CD8-positive, alpha-beta memory T cell (primary cell): ENCODE measurements at regions of chr14 and their contacts with region 1.

Region 1: GRCh38 chr14:60622917-60623257 is 26.4 kb downstream of the SIX1 start:
- DNase-seq: no peak
- H3K4me3 ChIP-seq: no peak overlapping the region
- H3K4me3 Mint-ChIP-seq: no peak overlapping the region
- H3K27ac ChIP-seq: no peak overlapping the region
- H3K27ac Mint-ChIP-seq: no peak overlapping the region
- H3K4me1 ChIP-seq: no peaks in the 10 kb centered on the region
- H3K4me1 Mint-ChIP-seq: no peaks in the 10 kb centered on the region
- H3K27me3 ChIP-seq: peaks cover 3% of the 10 kb centered on the region
- H3K27me3 Mint-ChIP-seq: peaks cover 11 to 36% of the 10 kb centered on the region in 2 donors

Region 2: GRCh38 chr14:60642270-60643140 is 19.6 kb after region 1 on chr14:
- CTCF ChIA-PET with region 1: interaction called, 10 read pairs
- POLR2A ChIA-PET with region 1: no interaction called
- DNase-seq: no peak
- H3K4me3 ChIP-seq: no peak overlapping the region
- H3K4me3 Mint-ChIP-seq: peak overlapping the region in 3 of 7 donors; percentile 41 to 61 (median 46)
- H3K27ac ChIP-seq: no peak overlapping the region
- H3K27ac Mint-ChIP-seq: no peak overlapping the region
- H3K4me1 ChIP-seq: peaks cover 14% of the 10 kb centered on the region
- H3K4me1 Mint-ChIP-seq: peaks cover 31 to 40% (median 34%) of the 10 kb centered on the region in 3 donors
- H3K27me3 ChIP-seq: peaks cover 86% of the 10 kb centered on the region
- H3K27me3 Mint-ChIP-seq: peaks cover 80 to 95% of the 10 kb centered on the region in 2 donors

Region 3: DNA sequence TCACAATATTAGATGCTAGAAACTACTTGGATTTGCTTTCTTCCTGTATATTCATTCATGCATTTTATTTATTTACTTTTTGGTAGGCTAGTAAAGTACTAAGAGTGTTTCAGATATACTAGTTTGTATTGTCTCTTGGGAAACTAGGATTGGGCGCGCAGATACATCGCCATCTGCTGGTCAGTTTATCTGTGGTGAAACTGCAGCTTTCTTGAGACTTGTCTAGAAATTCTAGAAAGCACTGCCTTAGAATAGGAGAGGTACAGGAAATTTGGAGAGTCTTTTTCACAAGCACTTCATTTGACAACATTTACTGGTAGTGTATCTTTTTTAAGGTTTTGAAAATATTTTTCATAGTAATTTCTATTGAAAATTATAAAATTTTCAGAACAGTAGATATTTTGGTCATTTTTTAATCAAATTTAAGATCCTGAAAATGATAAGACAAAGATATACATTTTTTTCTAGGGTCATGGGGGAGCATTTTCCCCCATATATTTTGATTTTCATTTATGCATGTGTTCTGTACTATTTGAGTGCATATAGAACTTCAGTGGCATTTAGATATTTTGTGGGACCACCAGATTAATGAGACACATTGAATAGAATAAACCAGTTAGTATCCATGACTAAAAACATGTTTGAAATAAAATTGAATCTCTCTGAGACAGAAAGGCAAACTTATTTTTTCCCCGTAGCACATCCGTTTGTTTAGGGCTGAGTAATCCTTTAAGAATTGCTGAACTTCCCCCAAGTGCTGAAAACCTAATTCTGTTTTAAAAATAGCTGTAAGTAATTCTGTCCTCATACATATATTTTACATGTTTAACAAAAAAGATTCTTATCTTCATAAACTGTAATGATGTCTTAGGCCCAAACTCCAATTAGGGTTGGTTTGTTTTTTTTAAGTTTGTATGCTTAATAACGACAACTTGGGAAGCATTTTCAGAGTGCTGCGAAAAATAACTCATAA is 402.6 kb after region 1 on chr14:
- CTCF ChIA-PET with region 1: interaction called, 46 read pairs
- POLR2A ChIA-PET with region 1: no interaction called
- DNase-seq: peak; percentile 3 to 59 (median 36)
- H3K4me3 ChIP-seq: no peak overlapping the region
- H3K4me3 Mint-ChIP-seq: no peak overlapping the region
- H3K27ac ChIP-seq: no peak overlapping the region
- H3K27ac Mint-ChIP-seq: no peak overlapping the region
- H3K4me1 ChIP-seq: no peaks in the 10 kb centered on the region
- H3K4me1 Mint-ChIP-seq: no peaks in the 10 kb centered on the region
- H3K27me3 ChIP-seq: no peaks in the 10 kb centered on the region
- H3K27me3 Mint-ChIP-seq: no peaks in the 10 kb centered on the region

Region 4: DNA sequence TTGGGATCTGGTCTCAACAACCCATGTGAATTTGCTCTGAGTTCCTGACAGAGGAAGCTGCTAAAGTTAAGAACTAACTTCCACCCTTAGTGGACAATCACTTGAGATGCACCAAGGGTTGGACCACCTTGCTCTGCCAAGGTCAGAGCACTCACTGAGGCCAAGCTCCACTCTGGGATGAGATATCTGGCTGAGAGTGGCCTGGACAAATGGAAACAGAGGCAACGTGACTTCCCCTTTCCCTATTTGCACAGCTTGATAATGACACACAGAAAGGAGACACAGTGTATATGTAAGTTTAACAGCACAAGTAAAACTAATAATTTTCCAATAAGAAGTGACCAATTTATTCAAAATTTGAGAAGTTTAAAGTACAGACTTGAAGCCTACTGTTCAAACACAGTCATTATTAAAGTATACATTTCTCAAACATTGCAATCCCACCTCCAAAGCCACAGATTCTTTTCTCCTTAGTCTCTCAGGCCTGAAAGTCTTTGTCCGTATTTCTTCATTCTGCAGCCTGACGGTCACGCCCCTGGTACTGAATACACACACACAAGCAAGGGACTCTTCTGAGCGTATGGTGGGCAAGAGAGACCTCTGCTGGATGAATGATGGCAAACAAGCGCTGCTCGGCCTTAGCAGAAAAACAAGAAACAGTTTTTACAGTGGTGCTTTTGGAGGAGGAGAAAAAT is 629.6 kb after region 1 on chr14:
- CTCF ChIA-PET with region 1: interaction called, 10 read pairs
- POLR2A ChIA-PET with region 1: no interaction called
- DNase-seq: peak; percentile 21 to 64 (median 47)
- H3K4me3 ChIP-seq: no peak overlapping the region
- H3K4me3 Mint-ChIP-seq: no peak overlapping the region
- H3K27ac ChIP-seq: no peak overlapping the region
- H3K27ac Mint-ChIP-seq: no peak overlapping the region
- H3K4me1 ChIP-seq: no peaks in the 10 kb centered on the region
- H3K4me1 Mint-ChIP-seq: peaks cover 3 to 7% (median 4%) of the 10 kb centered on the region in 3 donors
- H3K27me3 ChIP-seq: no peaks in the 10 kb centered on the region
- H3K27me3 Mint-ChIP-seq: peaks cover 10 to 39% of the 10 kb centered on the region in 2 donors